ENCODE measurements at regions of chr3 and their contacts with region 1.

Region 1: DNA sequence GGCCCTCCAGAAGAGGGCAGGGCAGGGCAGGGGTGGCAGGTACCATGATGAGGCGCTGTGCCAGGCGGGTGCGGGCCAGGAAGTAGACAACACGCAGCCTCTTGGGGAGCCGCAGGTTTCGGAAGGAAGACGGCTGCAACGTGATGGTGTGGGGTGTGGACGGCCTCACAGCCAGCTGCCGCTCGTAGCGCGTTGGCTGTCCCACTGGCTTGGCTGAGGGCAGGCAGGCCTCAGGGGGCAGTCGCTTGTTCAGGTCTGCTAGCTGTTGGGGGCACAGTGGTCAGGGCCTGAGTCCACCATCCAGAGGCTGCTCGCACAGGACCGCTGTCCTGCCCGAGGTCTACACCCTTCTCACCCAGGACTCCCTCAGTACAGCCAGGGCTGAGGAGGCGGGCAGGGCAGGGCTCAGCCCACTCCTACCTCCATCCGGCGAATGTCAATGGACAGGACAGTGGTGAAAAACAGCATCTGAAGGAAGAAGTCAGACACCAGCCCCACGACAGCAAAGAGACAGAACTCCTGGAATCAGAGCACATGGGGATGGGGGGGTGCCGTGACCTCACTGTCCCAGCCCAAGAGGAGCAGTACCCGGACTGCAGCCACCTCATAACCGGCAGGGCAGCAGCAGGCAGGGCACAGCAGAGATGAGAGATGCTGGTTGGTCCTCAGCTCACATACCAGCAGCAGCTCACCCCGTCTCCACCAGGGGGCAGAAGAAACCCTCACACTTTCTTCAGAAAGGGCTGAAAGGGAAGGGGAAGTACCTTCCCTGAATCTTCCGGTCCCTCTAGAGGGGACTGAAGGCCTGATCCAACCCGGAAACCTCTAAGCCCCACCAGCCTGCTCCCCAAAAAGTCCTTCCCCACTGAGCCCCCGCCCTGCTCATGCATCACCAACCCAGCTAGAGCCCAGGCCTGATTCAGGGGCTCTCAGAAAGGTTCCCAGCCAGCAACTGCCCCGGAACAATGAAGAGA is 40.0 kb downstream of the PTPN23 start:
- DNase-seq: peak; percentile 86 to 91 (median 87)
- H3K4me3 ChIP-seq: peak overlapping the region in 1 of 2 donors; percentile 4
- H3K4me3 Mint-ChIP-seq: peak overlapping the region; percentile 69 to 89 (median 78)
- H3K27ac ChIP-seq: peak overlapping the region; percentile 69
- H3K27ac Mint-ChIP-seq: peak overlapping the region; percentile 98 to 99 (median 99)
- H3K4me1 ChIP-seq: peaks cover 18% of the 10 kb centered on the region
- H3K4me1 Mint-ChIP-seq: peaks cover 8 to 21% (median 12%) of the 10 kb centered on the region in 4 donors
- H3K27me3 ChIP-seq: no peaks in the 10 kb centered on the region
- H3K27me3 Mint-ChIP-seq: no peaks in the 10 kb centered on the region

Region 2: GRCh38 chr3:47475570-47476329 is 55.0 kb after region 1 on chr3 and contains the start of gene SCAP:
- CTCF ChIA-PET with region 1: interaction called, 69 read pairs
- POLR2A ChIA-PET with region 1: interaction called, 27 read pairs
- intact Hi-C with region 1: loop called (anchors 1 kb)
- DNase-seq: peak; percentile 94 to 95 (median 95)
- H3K4me3 ChIP-seq: peak within 1 kb of the TSS; percentile 43 to 61
- H3K4me3 Mint-ChIP-seq: peak within 1 kb of the TSS; percentile 84 to 97 (median 92)
- H3K27ac ChIP-seq: peak within 1 kb of the TSS; percentile 72
- H3K27ac Mint-ChIP-seq: peak within 1 kb of the TSS; percentile 84 to 94 (median 93)
- H3K4me1 ChIP-seq: peaks cover 26% of the 10 kb centered on the region
- H3K4me1 Mint-ChIP-seq: peaks cover 25 to 48% (median 36%) of the 10 kb centered on the region in 4 donors
- H3K27me3 ChIP-seq: no peaks in the 10 kb centered on the region
- H3K27me3 Mint-ChIP-seq: no peaks in the 10 kb centered on the region
- total RNA-seq, gene SCAP: 85.7 to 88.1 TPM

Region 3: GRCh38 chr3:47791193-47791855 is 370.5 kb after region 1 on chr3:
- CTCF ChIA-PET with region 1: interaction called, 9 read pairs
- POLR2A ChIA-PET with region 1: interaction called, 5 read pairs
- intact Hi-C with region 1: loop called (anchors 1 kb)
- DNase-seq: no peak
- H3K4me3 ChIP-seq: no peak overlapping the region
- H3K4me3 Mint-ChIP-seq: peak overlapping the region in 1 of 8 donors; percentile 46
- H3K27ac ChIP-seq: no peak overlapping the region
- H3K27ac Mint-ChIP-seq: no peak overlapping the region
- H3K4me1 ChIP-seq: no peaks in the 10 kb centered on the region
- H3K4me1 Mint-ChIP-seq: peaks cover 0 to 1% (median 0%) of the 10 kb centered on the region in 4 donors
- H3K27me3 ChIP-seq: no peaks in the 10 kb centered on the region
- H3K27me3 Mint-ChIP-seq: no peaks in the 10 kb centered on the region